Activated T-helper 1 cell treated with anti-CD3 and anti-CD28 coated beads, Interleukin-12 subunit alpha, Interleukin-12 subunit beta, Interleukin-2, Interleukin-4 antibody, amounts not matched to agents 30 ng/mL and 10 ng/mL and 1 ng/mL, durations not matched to agents 14 hours and 24 hours and 36 hours (primary cell): ENCODE measurements at regions of chr10 and their contacts with region 1.

Region 1: GRCh38 chr10:6202684-6203330 is at the start of gene PFKFB3:
- DNase-seq: peak; percentile 92
- H3K4me3 Mint-ChIP-seq: peak within 1 kb of the TSS; percentile 96
- H3K27ac Mint-ChIP-seq: peak within 1 kb of the TSS; percentile 92
- H3K4me1 Mint-ChIP-seq: peaks cover 46% of the 10 kb centered on the region
- H3K27me3 Mint-ChIP-seq: no peaks in the 10 kb centered on the region
- total RNA-seq, gene PFKFB3: 90.3 and 93.8 TPM in 2 replicates

Region 2: GRCh38 chr10:6088721-6089390 is 114.0 kb before region 1 on chr10 and contains the start of gene RBM17:
- intact Hi-C with region 1: loop called (anchors 1 kb)
- DNase-seq: peak; percentile 98
- H3K4me3 Mint-ChIP-seq: peak within 1 kb of the TSS; percentile 95
- H3K27ac Mint-ChIP-seq: peak within 1 kb of the TSS; percentile 88
- H3K4me1 Mint-ChIP-seq: peaks cover 63% of the 10 kb centered on the region
- H3K27me3 Mint-ChIP-seq: no peaks in the 10 kb centered on the region
- total RNA-seq, gene RBM17: 265 and 283 TPM in 2 replicates

Region 3: DNA sequence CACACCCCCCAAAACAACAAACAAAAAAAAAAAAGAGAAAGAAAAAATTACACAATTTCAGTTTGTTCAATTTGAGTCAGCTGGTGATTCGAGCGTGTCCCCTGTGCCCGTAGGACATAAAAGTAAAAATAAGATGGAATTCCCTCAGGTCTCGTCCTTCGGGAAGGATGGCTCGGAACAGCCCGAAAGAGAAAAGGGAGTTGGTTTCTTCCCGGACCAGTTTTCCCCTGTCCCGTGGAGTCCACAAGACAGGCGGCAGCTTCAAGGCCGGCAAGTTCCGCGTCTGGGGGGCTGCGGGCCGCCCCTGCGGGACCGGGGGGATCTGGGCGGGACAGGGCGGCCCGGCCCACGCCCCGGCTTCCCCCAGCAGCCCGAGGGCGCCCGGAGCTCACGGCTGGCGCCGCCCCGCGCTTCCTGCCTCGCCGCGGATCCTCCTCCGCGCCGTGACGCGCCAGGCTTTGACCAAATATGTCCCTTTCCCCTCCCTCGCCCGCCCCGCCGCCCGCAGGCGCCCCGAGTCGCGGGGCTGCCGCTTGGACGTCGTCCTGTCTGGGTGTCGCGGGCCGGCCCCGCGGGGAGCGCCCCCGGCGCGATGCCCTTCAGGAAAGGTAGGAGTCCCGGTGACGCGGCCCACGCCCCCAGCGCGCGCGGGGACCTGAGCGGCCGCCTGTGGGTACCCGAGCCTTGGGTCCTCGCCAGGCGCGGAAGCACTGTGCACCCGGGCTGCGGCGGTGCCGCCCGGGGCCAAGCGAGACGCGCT is 58.2 kb before region 1 on chr10:
- intact Hi-C with region 1: loop called (anchors 1 kb)
- DNase-seq: peak; percentile 89
- H3K4me3 Mint-ChIP-seq: peak overlapping the region; percentile 85
- H3K27ac Mint-ChIP-seq: peak overlapping the region; percentile 86
- H3K4me1 Mint-ChIP-seq: peaks cover 82% of the 10 kb centered on the region
- H3K27me3 Mint-ChIP-seq: no peaks in the 10 kb centered on the region

Region 4: DNA sequence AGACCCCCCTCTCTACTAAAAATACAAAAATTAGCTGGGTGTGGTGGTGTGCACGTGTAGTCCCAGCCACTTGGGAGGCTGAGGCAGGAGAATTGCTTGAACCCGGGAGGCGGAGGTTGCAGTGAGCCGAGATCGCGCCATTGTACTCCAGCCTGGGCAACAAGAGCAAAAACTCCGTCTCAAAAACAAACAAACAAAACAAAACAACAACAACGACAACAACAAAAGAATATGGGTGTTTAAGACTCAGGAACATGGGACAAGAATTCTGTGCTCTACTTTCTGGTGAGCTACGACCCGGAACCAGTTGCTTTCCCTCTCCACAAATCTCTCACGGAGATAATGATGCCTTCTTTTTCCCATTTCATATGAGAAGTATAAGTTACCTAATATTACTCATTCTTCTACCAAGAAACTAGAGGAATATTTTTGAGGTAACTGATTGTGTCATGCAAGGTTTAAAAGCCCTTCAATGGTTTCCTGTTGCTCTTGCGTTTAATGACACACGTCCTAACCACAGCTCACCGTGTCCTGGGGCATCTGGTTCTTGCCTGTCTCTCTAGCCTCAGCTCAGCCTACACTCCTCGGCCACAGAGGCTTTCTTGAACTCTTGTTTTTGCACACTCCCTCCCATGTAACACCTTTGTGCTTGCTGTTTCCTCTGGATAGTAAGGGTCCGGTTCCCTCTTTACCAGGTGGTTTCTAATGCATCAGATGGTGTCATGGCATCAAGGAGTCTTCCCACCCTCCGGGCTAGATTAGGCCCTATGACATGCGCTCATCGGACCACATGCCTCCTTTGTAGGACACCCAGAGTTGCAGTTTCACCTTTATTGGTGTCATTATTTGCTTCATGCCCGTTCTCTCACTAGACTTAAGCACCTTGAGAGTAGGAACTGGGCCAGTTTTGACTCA is 67.4 kb after region 1 on chr10:
- intact Hi-C with region 1: loop called (anchors 1 kb)
- DNase-seq: peak; percentile 72
- H3K4me3 Mint-ChIP-seq: peak overlapping the region; percentile 55
- H3K27ac Mint-ChIP-seq: peak overlapping the region; percentile 97
- H3K4me1 Mint-ChIP-seq: peaks cover 80% of the 10 kb centered on the region
- H3K27me3 Mint-ChIP-seq: no peaks in the 10 kb centered on the region

Region 5: DNA sequence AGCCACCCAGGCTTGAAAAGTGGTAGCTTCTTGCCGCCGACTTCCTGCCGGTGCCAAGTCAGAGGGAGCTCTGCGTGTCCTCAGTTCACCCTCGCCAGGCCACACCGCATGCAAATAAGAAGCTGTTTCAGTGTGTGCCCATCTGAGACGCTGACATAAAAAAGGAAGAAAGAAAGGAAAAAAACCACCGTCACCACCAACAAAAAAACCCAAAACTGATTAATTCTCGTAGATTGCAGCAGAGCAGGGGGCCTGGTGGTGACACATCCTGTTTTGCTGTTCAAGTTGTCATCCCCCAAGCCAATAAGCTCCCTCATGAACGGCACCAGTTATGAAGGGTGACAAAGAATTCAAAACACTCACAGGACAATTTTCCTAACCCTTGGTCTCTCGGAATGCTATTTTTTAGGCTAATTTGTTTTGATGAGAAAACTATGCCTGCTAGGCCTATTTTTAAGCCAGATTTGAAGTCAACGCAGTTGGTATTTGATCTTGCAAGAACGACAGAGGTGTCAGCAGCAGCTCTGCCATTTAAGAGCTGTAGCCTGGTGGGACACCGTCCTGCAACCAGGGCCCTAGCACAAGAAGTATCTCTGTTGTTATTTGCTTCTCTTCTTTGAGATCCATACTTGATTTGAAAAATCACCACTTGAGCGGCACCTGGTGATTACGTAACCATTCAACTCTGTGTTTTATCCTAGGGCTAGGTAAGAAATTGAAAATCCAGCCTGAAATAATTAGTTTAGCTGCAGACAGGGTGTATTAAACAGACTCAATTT is 145.5 kb after region 1 on chr10:
- intact Hi-C with region 1: loop called (anchors 1 kb)
- DNase-seq: peak; percentile 62
- H3K4me3 Mint-ChIP-seq: peak overlapping the region; percentile 74
- H3K27ac Mint-ChIP-seq: peak overlapping the region; percentile 96
- H3K4me1 Mint-ChIP-seq: peaks cover 50% of the 10 kb centered on the region
- H3K27me3 Mint-ChIP-seq: no peaks in the 10 kb centered on the region

Region 6: DNA sequence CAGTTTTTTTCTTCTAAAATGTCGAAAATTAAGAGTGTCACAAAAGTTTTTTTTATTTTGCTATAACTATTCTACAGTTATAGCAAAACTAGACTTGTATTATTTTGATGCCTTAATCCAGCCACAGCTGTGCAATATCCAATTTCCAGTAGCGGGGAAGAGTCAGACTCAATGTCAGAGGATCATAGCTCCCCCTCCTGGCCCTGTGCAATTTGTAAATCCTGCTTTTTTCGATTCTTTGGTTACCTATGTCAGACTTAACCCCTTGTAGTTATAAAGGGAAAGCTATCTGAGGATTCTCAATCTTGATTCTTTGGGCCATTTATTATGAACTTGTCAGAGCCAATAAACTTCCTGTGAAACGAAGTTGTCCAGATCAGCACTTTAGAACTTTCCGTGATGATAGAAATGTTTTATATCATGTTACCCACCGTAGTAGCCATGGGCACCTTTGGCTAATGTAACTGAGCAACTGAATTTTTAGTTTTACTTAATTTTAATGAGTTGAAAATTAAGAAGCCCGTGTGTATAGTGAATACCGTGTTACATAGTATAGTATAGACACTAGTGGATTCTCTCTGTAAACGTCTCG is 465.0 kb after region 1 on chr10:
- intact Hi-C with region 1: loop called (anchors 1 kb)
- DNase-seq: peak; percentile 26
- H3K4me3 Mint-ChIP-seq: no peak overlapping the region
- H3K27ac Mint-ChIP-seq: no peak overlapping the region
- H3K4me1 Mint-ChIP-seq: peaks cover 36% of the 10 kb centered on the region
- H3K27me3 Mint-ChIP-seq: peaks cover 20% of the 10 kb centered on the region

Region 7: GRCh38 chr10:6748978-6749635 is 546.3 kb after region 1 on chr10:
- intact Hi-C with region 1: no loop called
- DNase-seq: no peak
- H3K4me3 Mint-ChIP-seq: no peak overlapping the region
- H3K27ac Mint-ChIP-seq: no peak overlapping the region
- H3K4me1 Mint-ChIP-seq: peaks cover 4% of the 10 kb centered on the region
- H3K27me3 Mint-ChIP-seq: peaks cover 19% of the 10 kb centered on the region